ENCODE measurements at regions of chr5 and their contacts with region 1.

Region 1: GRCh38 chr5:41524174-41524573 is 13.8 kb upstream of the PLCXD3 start:
- DNase-seq: peak; percentile 19
- ATAC-seq: peak; percentile 65
- H3K4me3 Mint-ChIP-seq: no peak overlapping the region
- H3K27ac Mint-ChIP-seq: no peak overlapping the region
- H3K4me1 Mint-ChIP-seq: peaks cover 10% of the 10 kb centered on the region
- H3K27me3 Mint-ChIP-seq: no peaks in the 10 kb centered on the region
- CTCF ChIP-seq: no peak; the same call in 1 of the 2 replicates

Region 2: DNA sequence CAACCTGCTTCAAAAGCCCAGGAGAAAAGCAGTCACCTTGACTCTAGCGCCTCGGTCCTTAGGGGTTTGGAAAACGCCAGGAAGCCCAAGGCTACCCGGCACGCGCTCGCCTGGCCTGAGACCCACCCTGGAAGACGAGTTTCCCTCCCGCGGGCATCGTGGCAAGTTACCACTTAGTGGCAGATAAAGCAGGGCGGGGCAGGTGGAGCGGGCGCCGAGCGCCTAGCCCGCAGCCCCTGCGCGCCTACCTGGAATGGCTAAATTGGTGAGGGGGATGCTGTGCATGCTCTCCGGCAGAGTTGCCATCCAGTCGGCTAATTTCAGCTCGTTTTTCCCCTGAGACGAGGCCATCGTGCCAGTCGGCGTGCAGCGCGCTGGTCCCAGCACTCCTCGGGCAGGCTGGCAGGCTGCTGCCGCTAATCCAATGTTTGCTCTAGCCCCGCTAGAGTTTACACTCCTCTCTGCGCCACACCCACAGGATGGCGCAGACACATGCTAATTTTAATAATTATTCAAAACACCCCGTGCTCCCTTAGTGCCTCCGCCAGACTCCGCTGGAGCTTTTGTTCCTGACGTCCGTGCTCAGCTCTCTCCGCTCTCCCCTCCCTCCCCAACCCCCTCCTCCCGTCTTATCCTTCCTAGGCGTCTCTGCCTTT is 13.9 kb before region 1 on chr5 and contains the start of gene PLCXD3:
- CTCF ChIA-PET with region 1: interaction called, 18 read pairs
- POLR2A ChIA-PET with region 1: no interaction called
- DNase-seq: peak; percentile 36
- ATAC-seq: peak; percentile 76
- H3K4me3 Mint-ChIP-seq: peak within 1 kb of the TSS; percentile 76
- H3K27ac Mint-ChIP-seq: no peak within 1 kb of the TSS
- H3K4me1 Mint-ChIP-seq: peaks cover 25% of the 10 kb centered on the region
- H3K27me3 Mint-ChIP-seq: peaks cover 39% of the 10 kb centered on the region
- CTCF ChIP-seq: no peak
- total RNA-seq, gene PLCXD3: 0.04 to 0.07 TPM (median 0.07 TPM) in 3 replicates

Region 3: DNA sequence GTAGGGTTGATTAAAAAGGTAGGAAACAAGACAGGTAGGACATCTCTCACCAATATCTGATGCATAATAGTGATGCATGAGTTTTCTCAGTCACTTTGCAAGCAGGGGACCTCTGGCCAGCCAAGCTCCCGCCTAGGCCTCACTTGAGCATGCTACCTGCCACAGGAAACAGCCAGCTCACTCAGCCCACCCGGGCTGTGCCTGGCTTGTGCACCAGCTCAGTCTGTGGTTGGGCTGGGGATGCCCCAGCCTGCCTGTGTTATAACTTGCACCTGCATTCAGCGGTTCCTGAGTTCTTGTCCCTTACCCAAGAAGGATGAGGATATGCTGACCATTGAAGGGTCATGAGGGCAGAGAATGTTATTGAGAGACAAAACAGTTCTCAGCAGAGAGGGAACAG is 159.0 kb after region 1 on chr5:
- CTCF ChIA-PET with region 1: no interaction called
- POLR2A ChIA-PET with region 1: no interaction called
- DNase-seq: no peak
- ATAC-seq: peak; percentile 82
- H3K4me3 Mint-ChIP-seq: no peak overlapping the region
- H3K27ac Mint-ChIP-seq: no peak overlapping the region
- H3K4me1 Mint-ChIP-seq: peaks cover 6% of the 10 kb centered on the region
- H3K27me3 Mint-ChIP-seq: no peaks in the 10 kb centered on the region
- CTCF ChIP-seq: no peak

Measured in WTC11 (cell line).